ENCODE measurements at regions of chr4 and their contacts with region 1.

Region 1: DNA sequence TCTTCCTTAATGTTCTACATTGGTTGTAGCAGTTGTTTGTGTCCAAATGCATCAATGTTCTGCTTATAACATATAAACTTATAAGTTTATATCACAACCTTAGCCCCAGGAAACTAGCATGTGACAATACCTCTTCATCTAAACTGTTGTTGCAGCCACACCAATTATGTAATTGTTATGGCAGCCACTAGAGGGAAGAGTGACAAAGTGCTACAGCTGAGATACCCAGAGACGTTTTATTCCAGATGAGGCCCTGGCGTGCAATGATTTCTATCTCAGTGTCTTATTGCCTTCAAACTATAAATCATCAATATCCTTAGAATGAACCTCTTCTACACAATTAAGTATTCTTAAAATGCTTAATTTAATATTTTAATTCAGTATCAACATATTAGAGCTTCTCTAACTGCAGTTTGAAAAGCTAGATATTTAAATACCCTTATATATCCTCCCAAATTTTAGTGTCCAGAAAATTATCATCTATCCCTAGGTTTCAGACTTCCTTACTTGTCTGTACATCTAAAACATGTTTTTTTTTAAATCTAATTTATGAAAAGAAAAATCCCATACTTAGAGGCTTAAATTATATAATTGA is 171.6 kb downstream of the PCDH10 start:
- DNase-seq: peak in 1 of 2 experiments; percentile 8
- H3K4me3 ChIP-seq: no peak overlapping the region
- H3K27ac ChIP-seq: no peak overlapping the region
- H3K4me1 ChIP-seq: no peaks in the 10 kb centered on the region
- H3K27me3 ChIP-seq: no peaks in the 10 kb centered on the region
- CTCF ChIP-seq: peak; percentile 64

Region 2: GRCh38 chr4:132827522-132827921 is 493.2 kb before region 1 on chr4:
- CTCF ChIA-PET with region 1: no interaction called
- POLR2A ChIA-PET with region 1: no interaction called
- intact Hi-C with region 1: no loop called
- DNase-seq: no peak
- H3K4me3 ChIP-seq: no peak overlapping the region
- H3K27ac ChIP-seq: no peak overlapping the region
- H3K4me1 ChIP-seq: no peaks in the 10 kb centered on the region
- H3K27me3 ChIP-seq: no peaks in the 10 kb centered on the region
- CTCF ChIP-seq: no peak

Region 3: DNA sequence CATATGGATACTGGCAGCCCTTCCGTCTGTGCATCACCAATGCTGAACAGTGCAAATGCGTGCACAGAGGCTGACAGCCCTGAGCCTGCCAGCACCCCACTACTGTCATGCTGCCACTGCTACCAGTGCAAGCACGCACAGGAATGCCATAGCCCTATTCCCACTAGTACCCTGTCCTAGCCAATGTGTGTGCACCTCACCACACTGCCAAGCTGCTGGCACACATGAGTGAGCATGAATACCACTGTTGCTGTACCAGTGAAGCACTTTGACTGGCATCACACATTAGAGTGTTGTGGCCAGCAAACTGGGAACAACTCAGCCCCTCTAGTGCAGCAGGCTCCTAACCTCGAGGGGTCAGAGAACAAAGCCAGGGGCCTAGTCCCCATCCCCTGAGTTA is 274.5 kb before region 1 on chr4:
- CTCF ChIA-PET with region 1: no interaction called
- POLR2A ChIA-PET with region 1: no interaction called
- intact Hi-C with region 1: no loop called
- DNase-seq: no peak
- H3K4me3 ChIP-seq: no peak overlapping the region
- H3K27ac ChIP-seq: no peak overlapping the region
- H3K4me1 ChIP-seq: no peaks in the 10 kb centered on the region
- H3K27me3 ChIP-seq: no peaks in the 10 kb centered on the region
- CTCF ChIP-seq: no peak

Region 4: DNA sequence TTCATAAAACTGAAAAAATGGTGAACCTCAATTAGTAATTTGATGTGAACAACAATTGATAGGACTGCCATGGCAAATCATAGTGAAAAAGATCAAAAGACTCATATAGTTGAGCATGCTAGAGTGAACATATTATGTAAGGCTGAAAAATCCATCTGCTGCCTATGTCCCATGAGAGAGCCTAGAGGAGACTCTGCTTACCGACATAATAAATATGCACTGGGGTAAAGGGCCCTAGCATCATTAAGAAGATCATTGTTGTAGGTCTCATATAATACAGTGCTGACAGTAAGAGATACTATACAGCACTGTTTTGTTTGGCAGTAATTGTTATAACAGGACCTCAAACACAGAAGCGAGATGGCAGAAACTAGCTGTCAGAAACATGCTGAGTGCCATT is 651.9 kb after region 1 on chr4:
- CTCF ChIA-PET with region 1: no interaction called
- POLR2A ChIA-PET with region 1: interaction called, 10 read pairs
- intact Hi-C with region 1: no loop called
- DNase-seq: no peak
- H3K4me3 ChIP-seq: no peak overlapping the region
- H3K27ac ChIP-seq: no peak overlapping the region
- H3K4me1 ChIP-seq: no peaks in the 10 kb centered on the region
- H3K27me3 ChIP-seq: no peaks in the 10 kb centered on the region
- CTCF ChIP-seq: no peak